Naive thymus-derived CD8-positive, alpha-beta T cell (primary cell): ENCODE measurements at regions of chr1 and their contacts with region 1.

Region 1: DNA sequence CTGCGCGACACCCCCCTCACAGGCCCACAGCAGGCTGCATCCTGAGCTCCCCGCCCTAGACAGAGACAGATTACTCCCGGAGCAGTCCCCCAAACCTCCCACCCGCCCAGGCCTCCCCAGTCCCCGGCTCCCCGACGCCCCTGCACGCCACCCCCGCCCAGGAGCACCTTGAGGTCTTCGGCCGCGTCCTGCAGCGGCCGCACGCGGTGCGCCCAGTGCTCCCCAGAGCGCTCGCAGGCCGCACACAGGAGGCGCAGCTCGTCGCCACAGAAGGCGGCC is 709 bp downstream of the TRIM11 start:
- DNase-seq: peak in 1 of 10 donors; percentile 20
- ATAC-seq: peak; percentile 10 to 13
- H3K4me3 Mint-ChIP-seq: peak overlapping the region; percentile 84 to 96 (median 92)
- H3K27ac Mint-ChIP-seq: peak overlapping the region; percentile 60 to 94 (median 90)
- H3K4me1 Mint-ChIP-seq: peaks cover 41 to 71% (median 60%) of the 10 kb centered on the region in 4 donors
- H3K27me3 Mint-ChIP-seq: no peaks in the 10 kb centered on the region

Region 2: DNA sequence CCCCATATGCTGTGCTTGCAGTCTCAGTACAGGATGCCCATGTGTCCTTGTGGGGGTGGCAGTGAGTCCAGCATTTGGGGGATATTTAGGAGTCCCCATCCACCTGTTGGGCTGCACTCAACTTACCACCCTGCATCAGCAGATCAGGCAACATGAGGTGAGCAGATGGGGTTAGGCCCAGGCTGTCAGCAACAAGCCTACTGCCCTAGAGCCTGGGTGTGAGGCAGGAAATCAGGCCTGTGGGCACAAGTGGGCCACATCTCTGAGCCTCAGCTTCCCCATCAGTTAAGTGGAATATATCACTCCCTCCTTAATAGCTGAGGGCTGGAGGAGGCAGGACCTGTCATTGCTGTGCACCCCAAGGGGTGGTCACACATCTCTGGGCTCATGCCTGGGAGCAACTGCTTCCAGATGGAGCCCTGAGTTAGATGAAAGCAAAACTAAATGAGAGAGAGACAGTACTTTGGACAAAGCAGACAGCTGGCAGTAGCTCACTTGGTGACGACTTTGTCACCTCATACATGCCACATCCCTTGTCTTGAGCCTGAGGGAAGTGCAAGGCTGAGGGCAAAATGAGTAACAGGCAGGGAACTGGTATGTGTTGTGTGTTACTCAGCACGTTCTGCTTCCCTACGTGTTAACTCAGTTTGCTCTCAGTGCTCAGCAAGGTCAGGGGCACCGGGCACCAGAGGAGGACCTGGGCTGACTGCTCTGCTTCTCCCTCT is 47.7 kb before region 1 on chr1:
- POLR2A ChIA-PET with region 1: no interaction called
- DNase-seq: no peak
- ATAC-seq: no peak
- H3K4me3 Mint-ChIP-seq: no peak overlapping the region
- H3K27ac Mint-ChIP-seq: peak overlapping the region in 5 of 10 donors; percentile 24 to 83 (median 77)
- H3K4me1 Mint-ChIP-seq: peaks cover 0 to 2% (median 0%) of the 10 kb centered on the region in 4 donors
- H3K27me3 Mint-ChIP-seq: no peaks in the 10 kb centered on the region

Region 3: DNA sequence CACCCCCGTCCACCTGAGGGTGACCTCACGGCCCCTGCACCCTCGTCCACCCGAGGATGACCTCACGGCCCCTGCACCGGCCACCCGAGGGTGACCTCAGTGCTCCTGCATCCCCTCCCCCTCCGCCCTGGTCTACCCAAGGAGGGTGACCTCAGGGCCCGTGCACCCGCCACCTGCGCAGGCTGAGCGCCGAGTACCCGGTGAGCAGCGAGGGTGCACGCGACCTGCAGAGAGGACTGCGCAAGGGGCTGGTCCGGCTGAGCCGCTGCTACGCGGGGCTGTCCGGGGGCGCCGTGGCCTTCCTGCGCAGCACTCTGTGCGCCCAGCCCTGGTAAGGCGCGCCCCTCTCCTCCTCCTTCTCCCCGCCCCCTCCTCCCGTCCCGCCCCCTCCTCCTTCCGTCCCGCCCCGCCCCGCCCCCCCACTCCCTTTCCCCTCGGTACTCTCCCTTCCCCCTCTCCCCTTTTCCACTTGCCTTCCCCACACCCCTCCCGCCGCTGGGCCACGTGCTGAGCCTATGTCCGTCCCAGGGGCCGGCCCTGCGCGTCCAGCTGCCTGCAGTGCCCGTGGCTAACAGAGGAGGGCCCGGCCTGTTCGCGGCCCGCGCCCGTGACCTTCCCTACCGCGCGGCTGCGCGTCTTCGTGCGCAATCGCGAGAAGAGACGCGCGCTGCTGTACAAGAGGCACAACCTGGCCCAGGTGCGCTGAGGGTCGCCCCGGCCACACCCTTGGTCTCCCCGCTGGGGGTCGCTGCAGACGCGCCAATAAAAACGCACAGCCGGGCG is 27.6 kb before region 1 on chr1:
- POLR2A ChIA-PET with region 1: no interaction called
- DNase-seq: peak in 9 of 10 donors; percentile 41 to 81 (median 51)
- ATAC-seq: peak; percentile 83 to 86
- H3K4me3 Mint-ChIP-seq: peak overlapping the region; percentile 74 to 94 (median 84)
- H3K27ac Mint-ChIP-seq: peak overlapping the region in 1 of 10 donors; percentile 40
- H3K4me1 Mint-ChIP-seq: peaks cover 7 to 11% (median 9%) of the 10 kb centered on the region in 4 donors
- H3K27me3 Mint-ChIP-seq: peaks cover 4 to 29% (median 21%) of the 10 kb centered on the region in 5 donors

Region 4: GRCh38 chr1:228416217-228416933 is 10.4 kb after region 1 on chr1 and contains the start of gene TRIM17:
- POLR2A ChIA-PET with region 1: interaction called, 12 read pairs
- DNase-seq: peak in 7 of 10 donors; percentile 19 to 47 (median 38)
- ATAC-seq: peak; percentile 73 to 83
- H3K4me3 Mint-ChIP-seq: peak within 1 kb of the TSS; percentile 76 to 96 (median 86)
- H3K27ac Mint-ChIP-seq: peak within 1 kb of the TSS in 9 of 10 donors; percentile 1 to 72 (median 43)
- H3K4me1 Mint-ChIP-seq: peaks cover 19 to 35% (median 27%) of the 10 kb centered on the region in 4 donors
- H3K27me3 Mint-ChIP-seq: peaks cover under 1 to 14% (median 5%) of the 10 kb centered on the region in 5 donors
- polyA plus RNA-seq, gene TRIM17: 0.39 to 0.62 (median 0.58) TPM

Region 5: DNA sequence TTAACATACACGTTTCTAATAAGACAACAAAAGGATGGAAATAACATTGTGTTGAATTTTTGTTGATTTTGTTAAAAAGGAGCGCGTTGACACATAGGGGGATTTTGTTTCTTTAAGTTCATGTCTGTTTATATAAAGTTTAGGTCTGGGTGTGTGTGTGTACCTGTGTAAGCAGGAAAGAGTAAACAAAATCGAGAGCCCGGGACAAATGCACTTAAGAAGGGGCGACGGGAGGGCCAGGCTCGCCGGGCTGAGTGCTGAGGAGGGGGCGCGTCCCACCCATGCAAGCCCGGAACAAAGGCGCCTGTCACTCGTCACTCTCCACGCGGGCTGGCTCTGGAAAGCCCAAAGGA is 39.5 kb after region 1 on chr1:
- POLR2A ChIA-PET with region 1: no interaction called
- DNase-seq: no peak
- ATAC-seq: no peak
- H3K4me3 Mint-ChIP-seq: peak overlapping the region; percentile 70 to 89 (median 84)
- H3K27ac Mint-ChIP-seq: peak overlapping the region in 2 of 10 donors; percentile 2 to 70
- H3K4me1 Mint-ChIP-seq: peaks cover 9 to 17% (median 15%) of the 10 kb centered on the region in 4 donors
- H3K27me3 Mint-ChIP-seq: peaks cover 18 to 75% (median 62%) of the 10 kb centered on the region in 5 donors

Region 6: DNA sequence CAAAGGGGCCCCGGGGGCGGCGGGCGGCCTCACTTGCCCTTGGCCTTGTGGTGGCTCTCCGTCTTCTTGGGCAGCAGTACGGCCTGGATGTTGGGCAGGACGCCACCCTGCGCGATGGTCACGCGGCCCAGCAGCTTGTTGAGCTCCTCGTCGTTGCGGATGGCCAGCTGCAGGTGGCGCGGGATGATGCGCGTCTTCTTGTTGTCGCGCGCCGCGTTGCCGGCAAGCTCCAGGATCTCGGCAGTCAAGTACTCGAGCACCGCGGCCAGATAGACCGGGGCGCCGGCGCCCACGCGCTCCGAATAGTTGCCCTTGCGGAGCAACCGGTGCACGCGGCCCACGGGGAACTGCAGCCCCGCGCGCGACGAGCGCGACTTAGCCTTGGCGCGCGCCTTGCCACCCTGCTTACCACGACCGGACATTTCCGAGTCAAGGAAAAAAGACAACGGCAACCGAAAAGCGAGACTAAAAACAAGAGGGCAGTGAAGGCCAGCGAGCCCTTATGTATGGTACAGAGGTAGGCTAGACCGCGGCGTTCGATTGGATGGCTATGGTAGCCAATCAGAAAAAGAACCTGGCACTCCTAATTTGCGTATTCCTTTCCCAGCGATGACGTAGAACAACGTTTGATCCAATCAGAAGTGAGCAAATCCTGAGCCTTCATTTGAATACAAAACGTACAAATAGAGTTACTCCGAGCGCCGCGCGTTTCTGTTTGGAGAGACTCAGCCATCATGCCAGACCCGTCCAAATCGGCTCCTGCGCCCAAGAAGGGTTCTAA is 51.7 kb after region 1 on chr1:
- POLR2A ChIA-PET with region 1: interaction called, 20 read pairs
- DNase-seq: peak; percentile 61 to 94 (median 86)
- ATAC-seq: peak; percentile 82 to 84
- H3K4me3 Mint-ChIP-seq: peak overlapping the region; percentile 83 to 99 (median 94)
- H3K27ac Mint-ChIP-seq: peak overlapping the region; percentile 89 to 100 (median 98)
- H3K4me1 Mint-ChIP-seq: peaks cover 13 to 51% (median 34%) of the 10 kb centered on the region in 4 donors
- H3K27me3 Mint-ChIP-seq: peaks cover 0 to 30% (median 8%) of the 10 kb centered on the region in 5 donors

Region 7: GRCh38 chr1:228486596-228487335 is 80.8 kb after region 1 on chr1:
- POLR2A ChIA-PET with region 1: interaction called, 18 read pairs
- DNase-seq: peak; percentile 68 to 96 (median 80)
- ATAC-seq: peak; percentile 76 to 81
- H3K4me3 Mint-ChIP-seq: peak overlapping the region; percentile 91 to 99 (median 96)
- H3K27ac Mint-ChIP-seq: peak overlapping the region; percentile 99 to 100 (median 100)
- H3K4me1 Mint-ChIP-seq: peaks cover 20 to 41% (median 33%) of the 10 kb centered on the region in 4 donors
- H3K27me3 Mint-ChIP-seq: no peaks in the 10 kb centered on the region

Region 8: DNA sequence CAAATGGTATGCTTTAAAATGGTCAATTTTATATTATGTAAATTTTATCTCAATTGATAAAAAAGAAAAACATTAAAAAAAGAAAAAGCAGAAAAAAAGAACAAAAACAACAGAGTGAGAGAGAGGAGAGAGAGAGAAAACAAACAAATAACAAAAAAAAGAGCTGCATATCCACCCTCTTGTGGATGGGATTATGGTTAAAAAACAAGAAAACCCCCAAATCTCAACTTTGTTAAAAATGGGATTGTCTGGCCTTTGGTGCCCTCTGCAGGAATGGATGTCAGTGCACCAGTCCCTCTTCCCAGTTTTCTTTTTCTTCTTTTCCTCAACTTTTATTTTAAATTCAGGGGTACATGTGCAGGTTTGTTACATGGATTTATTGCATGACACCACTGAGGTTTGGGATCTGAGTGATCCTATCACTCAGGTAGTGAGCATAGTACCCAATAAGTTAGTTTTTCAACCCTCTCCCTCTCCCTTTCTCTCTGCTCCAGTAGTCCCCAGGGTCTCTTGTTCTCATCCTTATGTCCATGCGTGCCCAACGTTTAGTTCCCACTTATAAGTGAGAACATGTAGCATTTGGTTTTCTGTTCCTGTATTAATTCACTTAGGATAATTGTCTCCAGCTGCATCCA is 109.4 kb after region 1 on chr1:
- POLR2A ChIA-PET with region 1: no interaction called
- DNase-seq: peak in 9 of 10 donors; percentile 23 to 70 (median 41)
- ATAC-seq: peak; percentile 55 to 56
- H3K4me3 Mint-ChIP-seq: no peak overlapping the region
- H3K27ac Mint-ChIP-seq: peak overlapping the region in 3 of 10 donors; percentile 17 to 57 (median 56)
- H3K4me1 Mint-ChIP-seq: peaks cover 9 to 16% (median 11%) of the 10 kb centered on the region in 4 donors
- H3K27me3 Mint-ChIP-seq: peaks cover 7 to 49% (median 23%) of the 10 kb centered on the region in 5 donors

Region 9: GRCh38 chr1:229254910-229255541 is 849.1 kb after region 1 on chr1:
- POLR2A ChIA-PET with region 1: interaction called, 12 read pairs
- DNase-seq: peak in 7 of 10 donors; percentile 8 to 69 (median 49)
- ATAC-seq: peak; percentile 53 to 64
- H3K4me3 Mint-ChIP-seq: peak overlapping the region in 9 of 10 donors; percentile 54 to 81 (median 72)
- H3K27ac Mint-ChIP-seq: peak overlapping the region; percentile 54 to 98 (median 91)
- H3K4me1 Mint-ChIP-seq: peaks cover 37 to 67% (median 59%) of the 10 kb centered on the region in 4 donors
- H3K27me3 Mint-ChIP-seq: no peaks in the 10 kb centered on the region